ENCODE measurements at regions of chr5 and their contacts with region 1.

Region 1: GRCh38 chr5:30676223-30676840 is 517.2 kb upstream of the CDH6 start:
- DNase-seq: no peak
- H3K4me3 Mint-ChIP-seq: no peak overlapping the region
- H3K27ac Mint-ChIP-seq: no peak overlapping the region
- H3K4me1 Mint-ChIP-seq: peaks cover 7% of the 10 kb centered on the region
- H3K27me3 Mint-ChIP-seq: no peaks in the 10 kb centered on the region
- CTCF ChIP-seq: no peak

Region 2: GRCh38 chr5:30436691-30437090 is 239.6 kb before region 1 on chr5:
- CTCF ChIA-PET with region 1: no interaction called
- POLR2A ChIA-PET with region 1: no interaction called
- intact Hi-C with region 1: loop called (anchors 2 kb)
- DNase-seq: no peak
- H3K4me3 Mint-ChIP-seq: no peak overlapping the region
- H3K27ac Mint-ChIP-seq: peak overlapping the region; percentile 32
- H3K4me1 Mint-ChIP-seq: peaks cover 16% of the 10 kb centered on the region
- H3K27me3 Mint-ChIP-seq: no peaks in the 10 kb centered on the region
- CTCF ChIP-seq: no peak

Measured in MCF 10A (cell line).